ENCODE measurements at regions of chr19 and their contacts with region 1.

Region 1: DNA sequence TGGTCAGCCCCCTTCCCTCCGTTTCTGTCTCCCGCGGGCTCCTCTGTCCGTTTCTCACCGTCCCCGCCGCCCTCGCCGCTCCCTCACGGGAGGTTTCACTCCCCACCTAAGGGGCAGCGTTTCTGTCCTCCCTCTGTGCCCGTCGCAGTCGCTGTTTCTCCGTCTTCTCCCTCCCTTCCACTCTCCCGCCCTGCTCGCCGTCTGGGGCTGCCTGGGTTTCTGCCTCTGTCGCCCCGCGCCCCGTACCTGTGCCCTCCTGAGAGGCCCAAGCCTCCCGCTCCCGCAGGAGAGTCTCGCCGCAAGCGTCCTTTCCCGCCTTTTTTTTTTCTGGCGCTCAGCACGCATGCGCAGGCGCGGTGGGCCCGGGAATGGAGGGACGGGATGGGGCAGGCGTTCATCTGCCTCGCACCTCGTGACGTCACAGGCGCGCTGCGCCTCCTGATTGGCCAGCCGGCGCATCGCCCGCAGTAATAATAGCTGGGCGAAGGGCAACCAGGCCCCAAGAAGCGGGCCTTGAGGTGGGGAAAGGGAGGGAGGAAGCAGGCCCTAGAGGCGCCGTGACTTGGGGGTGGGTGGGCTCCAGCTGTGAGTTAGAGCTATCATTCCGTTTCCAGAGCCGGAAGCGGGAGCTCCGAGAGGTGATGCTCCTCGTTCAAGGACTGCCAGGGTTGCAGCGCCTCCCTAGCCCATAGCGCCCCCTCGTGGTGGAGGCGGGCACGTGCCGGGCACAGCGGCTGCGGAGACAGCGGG is 15.4 kb downstream of the SSC5D start:
- DNase-seq: peak; percentile 92
- H3K4me3 ChIP-seq: peak overlapping the region in 2 of 4 donors; percentile 34 to 51
- H3K27ac ChIP-seq: peak overlapping the region; percentile 74 to 82 (median 76)
- H3K4me1 ChIP-seq: peaks cover 0 to 10% (median 5%) of the 10 kb centered on the region in 4 donors
- H3K27me3 ChIP-seq: no peaks in the 10 kb centered on the region
- CTCF ChIP-seq: peak; percentile 97 to 99 (median 99)
- EP300 ChIP-seq: no peak
- POLR2A ChIP-seq: no peak

Region 2: DNA sequence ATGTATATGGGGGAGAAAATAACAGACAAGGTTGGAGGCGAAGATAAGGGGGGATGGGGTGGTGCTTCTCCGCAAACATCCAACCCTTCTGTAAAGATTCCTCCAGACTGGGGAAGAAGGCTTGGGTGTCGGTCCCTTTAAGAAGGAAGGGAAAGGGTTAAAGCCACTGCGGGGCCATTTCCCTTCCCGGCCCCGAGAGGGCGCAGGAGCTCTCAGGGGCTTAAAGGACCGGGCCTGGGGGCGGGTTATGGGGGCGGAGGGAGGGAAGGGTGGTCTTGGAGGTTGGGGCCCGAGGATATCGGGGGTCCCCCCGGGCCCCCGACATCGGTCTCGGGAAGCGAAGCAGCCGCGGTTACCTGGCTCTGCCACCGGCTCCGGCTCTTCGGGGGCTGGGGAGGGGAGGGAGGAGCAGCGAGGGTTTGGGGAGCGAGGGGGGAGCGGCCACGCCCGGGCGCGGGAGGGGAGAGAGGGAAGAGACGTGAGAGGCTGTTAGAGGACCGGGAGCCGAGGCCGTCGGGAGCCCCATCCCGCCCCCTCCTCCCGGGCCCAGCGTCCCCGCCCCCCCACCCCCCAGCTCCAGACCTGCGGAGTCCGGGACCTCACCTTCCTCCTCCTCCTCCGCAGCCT is 357.5 kb before region 1 on chr19:
- in situ Hi-C with region 1: loop called in 2 of 4 experiments (anchors 10 kb)
- intact Hi-C with region 1: loop called (anchors 10 kb)
- DNase-seq: no peak
- H3K4me3 ChIP-seq: no peak overlapping the region
- H3K27ac ChIP-seq: no peak overlapping the region
- H3K4me1 ChIP-seq: peaks cover 0 to 13% (median 11%) of the 10 kb centered on the region in 4 donors
- H3K27me3 ChIP-seq: peaks cover 97% of the 10 kb centered on the region
- CTCF ChIP-seq: peak in 4 of 5 experiments; percentile 12 to 33 (median 24)
- EP300 ChIP-seq: no peak
- POLR2A ChIP-seq: no peak

Region 3: GRCh38 chr19:55437410-55438075 is 66.1 kb before region 1 on chr19:
- in situ Hi-C with region 1: no loop called
- intact Hi-C with region 1: no loop called
- DNase-seq: no peak
- H3K4me3 ChIP-seq: no peak overlapping the region
- H3K27ac ChIP-seq: no peak overlapping the region
- H3K4me1 ChIP-seq: peaks cover 0 to 20% (median 3%) of the 10 kb centered on the region in 4 donors
- H3K27me3 ChIP-seq: peaks cover 82% of the 10 kb centered on the region
- CTCF ChIP-seq: no peak
- EP300 ChIP-seq: no peak
- POLR2A ChIP-seq: no peak

Region 4: DNA sequence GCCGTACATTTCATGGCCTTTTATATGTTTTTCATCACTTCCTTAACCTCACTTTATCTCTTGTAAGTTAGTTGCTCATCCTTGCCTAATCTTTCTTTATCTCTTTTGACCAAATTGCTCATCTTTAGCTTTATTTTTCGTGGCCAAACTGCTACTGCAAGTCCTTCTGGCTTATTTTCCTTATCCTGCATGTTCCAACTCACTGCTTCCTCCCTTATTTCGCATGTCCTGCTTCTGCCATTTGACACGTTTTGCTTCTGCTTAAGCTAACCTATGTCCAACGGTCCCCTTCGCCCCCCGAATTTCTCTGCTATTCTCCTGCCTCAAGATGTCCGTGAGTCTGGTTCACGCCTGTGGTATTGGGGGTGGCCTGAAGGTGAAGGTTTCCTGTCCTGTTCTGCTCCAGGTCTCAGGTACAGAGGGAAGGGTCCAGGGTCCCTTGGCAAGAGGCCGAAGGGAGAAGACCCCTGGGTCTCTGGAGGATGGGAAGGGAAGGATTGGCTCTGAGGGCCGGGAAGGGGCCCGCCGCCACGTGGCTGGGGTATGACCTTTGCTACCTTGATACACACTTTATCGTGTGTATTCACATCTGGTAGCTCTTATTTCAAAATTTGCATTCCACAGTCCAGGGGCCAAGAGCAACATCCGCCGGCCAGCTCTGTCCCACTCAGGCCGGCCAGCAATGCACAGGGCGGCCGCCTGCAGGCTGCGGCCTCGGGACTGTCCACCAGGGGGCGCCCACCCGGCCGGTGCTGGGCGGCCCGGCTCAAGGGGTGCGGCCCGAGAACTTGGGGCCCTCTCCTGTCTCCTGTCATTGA is 36.2 kb before region 1 on chr19:
- in situ Hi-C with region 1: no loop called
- intact Hi-C with region 1: loop called (anchors 2 kb)
- DNase-seq: peak; percentile 75
- H3K4me3 ChIP-seq: no peak overlapping the region
- H3K27ac ChIP-seq: no peak overlapping the region
- H3K4me1 ChIP-seq: peaks cover 3 to 7% (median 5%) of the 10 kb centered on the region in 4 donors
- H3K27me3 ChIP-seq: no peaks in the 10 kb centered on the region
- CTCF ChIP-seq: peak; percentile 91 to 100 (median 99)
- EP300 ChIP-seq: no peak
- POLR2A ChIP-seq: no peak

Region 5: GRCh38 chr19:55653758-55654539 is 150.3 kb after region 1 on chr19:
- in situ Hi-C with region 1: no loop called
- intact Hi-C with region 1: no loop called
- DNase-seq: peak; percentile 99
- H3K4me3 ChIP-seq: peak overlapping the region; percentile 64 to 93 (median 79)
- H3K27ac ChIP-seq: peak overlapping the region; percentile 93 to 100 (median 99)
- H3K4me1 ChIP-seq: peaks cover 34 to 49% (median 41%) of the 10 kb centered on the region in 4 donors
- H3K27me3 ChIP-seq: no peaks in the 10 kb centered on the region
- CTCF ChIP-seq: peak; percentile 97 to 100 (median 99)
- EP300 ChIP-seq: no peak
- POLR2A ChIP-seq: peak; percentile 92